Common myeloid progenitor, CD34-positive (primary cell): ENCODE measurements at regions of chr2 and their contacts with region 1.

Region 1: DNA sequence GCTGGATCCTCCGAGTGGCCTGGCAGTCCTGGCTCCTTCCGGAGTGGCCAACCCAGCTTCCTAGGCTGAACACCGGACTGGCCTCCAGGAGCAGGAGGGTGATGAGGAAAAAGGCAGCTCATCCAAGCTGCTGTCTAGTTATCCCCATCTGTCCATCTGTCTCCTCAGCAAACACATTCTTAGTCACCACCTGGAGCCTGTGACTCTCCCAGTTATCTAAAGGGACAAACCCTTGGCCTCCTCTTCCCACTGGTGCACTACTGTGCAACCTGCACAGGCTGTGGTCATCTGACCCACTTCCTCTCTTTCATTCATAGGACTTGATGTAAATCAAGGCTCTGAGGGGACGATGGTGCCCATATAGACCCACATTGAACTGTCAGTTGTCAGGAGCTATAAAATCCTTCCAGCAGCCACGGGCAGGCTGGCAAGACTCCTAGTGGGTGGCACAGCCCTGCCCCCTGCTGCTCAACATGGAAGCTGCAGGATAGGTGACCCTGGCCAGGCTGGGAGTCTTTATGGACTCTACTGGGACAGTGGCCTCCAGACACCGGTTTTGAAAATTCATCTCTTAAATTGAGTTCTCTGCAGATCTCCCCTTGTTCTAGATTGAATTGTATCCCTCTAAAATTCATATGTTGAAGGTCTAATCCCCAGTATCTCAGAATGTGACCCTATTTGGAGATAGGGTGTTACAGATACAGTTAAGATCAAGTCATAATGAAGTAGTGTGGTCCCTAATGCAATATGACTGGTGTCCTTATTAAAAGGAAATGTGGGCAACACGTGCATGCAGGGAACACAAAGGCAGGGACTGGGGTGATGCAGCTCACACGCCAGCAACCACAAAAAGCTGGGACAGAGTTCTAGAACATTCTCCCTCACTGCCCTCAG is 29.3 kb upstream of the DUSP2 start:
- DNase-seq: peak; percentile 64 to 83 (median 75)
- H3K4me3 ChIP-seq: no peak overlapping the region
- H3K27ac ChIP-seq: no peak overlapping the region
- H3K4me1 ChIP-seq: peaks cover 0 to 2% (median 0%) of the 10 kb centered on the region in 4 experiments
- H3K27me3 ChIP-seq: no peaks in the 10 kb centered on the region

Region 2: DNA sequence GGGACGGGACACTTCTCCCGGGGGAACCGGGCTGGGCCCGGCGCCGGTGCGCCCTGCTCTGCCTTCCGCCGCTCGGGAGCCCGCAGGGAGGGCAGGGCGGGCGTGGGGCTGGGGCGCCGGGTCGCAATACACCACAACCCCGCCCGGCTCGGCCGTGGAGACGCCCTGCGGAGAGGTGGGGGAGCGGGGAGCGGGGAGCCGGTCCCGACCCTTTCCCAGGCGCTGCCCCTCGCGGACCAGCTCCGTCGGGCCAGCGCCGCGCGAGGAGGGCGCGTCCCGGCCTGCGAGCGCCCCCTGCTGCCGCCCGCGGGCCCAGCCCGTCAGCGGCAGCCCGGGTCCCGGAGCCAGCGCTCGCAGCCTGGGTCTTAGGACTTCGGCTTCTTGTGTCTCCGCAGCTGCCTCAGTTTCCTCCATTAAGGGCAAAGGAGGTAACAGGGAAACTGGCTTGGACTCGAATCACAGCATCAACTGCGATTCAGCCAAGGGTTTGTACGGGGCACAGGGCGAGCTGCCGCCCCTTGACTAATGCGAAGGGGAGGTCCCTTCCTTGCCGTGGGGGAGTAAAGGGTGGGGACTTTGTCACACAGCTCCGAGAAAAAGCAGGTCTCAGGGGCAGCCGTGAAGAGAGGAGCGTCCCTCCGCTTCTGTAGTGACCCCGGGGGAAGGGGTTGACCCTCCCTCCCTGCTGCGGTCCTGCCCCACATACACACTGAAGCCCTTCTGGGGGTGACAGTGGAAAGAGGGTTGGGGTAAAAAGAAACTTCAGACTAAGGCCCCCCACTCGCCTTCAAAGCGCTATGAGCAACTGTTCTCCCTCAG is 57.4 kb before region 1 on chr2:
- CTCF ChIA-PET with region 1: interaction called, 22 read pairs
- POLR2A ChIA-PET with region 1: no interaction called
- DNase-seq: peak; percentile 28 to 54 (median 47)
- H3K4me3 ChIP-seq: peak overlapping the region in 6 of 7 experiments; percentile 42 to 73 (median 56)
- H3K27ac ChIP-seq: no peak overlapping the region
- H3K4me1 ChIP-seq: peaks cover 0 to 32% (median 27%) of the 10 kb centered on the region in 4 experiments
- H3K27me3 ChIP-seq: peaks cover 0 to 41% (median 8%) of the 10 kb centered on the region in 5 experiments

Region 3: GRCh38 chr2:96145036-96145847 is 29.3 kb before region 1 on chr2 and contains the start of gene DUSP2:
- CTCF ChIA-PET with region 1: interaction called, 346 read pairs
- POLR2A ChIA-PET with region 1: interaction called, 7 read pairs
- DNase-seq: peak; percentile 84 to 93 (median 88)
- H3K4me3 ChIP-seq: peak within 1 kb of the TSS; percentile 52 to 80 (median 69)
- H3K27ac ChIP-seq: peak within 1 kb of the TSS; percentile 77 to 79
- H3K4me1 ChIP-seq: peaks cover 10 to 71% (median 66%) of the 10 kb centered on the region in 4 experiments
- H3K27me3 ChIP-seq: no peaks in the 10 kb centered on the region

Region 4: DNA sequence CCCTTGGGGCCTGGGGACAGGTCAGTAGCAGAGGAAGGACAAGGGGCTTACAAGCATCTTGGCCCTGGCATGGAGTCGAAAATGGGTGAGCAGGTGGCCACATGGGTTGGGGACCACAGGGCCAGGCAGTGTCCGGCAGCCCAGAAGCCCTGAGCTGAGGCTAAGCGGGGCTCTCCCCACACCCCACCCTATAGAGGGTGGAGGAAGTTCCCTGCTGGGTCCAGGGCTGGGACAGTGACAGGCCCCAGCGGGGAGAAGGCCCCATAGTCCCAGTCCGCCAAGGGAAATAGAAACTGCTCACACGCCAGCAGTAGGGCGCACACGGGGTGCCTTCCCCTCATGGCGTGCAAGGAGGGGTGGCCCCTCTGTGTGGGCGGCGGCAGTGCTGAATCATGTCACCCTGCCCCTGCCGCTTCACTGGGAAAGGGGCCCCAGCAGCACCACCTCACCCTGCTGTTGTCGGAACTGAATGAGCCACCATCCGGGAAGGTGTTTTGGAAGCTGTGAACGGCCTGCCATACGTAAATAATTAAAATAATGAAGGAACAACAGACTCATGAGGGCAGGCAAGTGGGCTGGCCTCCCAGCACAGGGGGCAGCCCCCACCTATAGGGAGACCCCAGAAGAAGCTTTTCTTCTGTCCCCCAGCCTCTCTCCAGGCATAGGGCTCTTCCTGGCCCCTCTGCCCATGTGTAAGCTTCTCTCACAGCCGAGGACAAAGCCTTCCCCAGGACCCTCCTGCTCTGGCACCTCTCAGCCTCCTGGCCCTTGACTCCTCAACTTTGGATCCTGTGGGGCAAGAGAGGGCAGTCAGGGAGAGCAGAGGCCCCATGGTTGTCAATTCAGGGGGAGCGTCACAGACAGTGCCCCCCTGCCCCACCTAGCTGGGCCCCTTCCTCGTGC is 16.6 kb before region 1 on chr2:
- CTCF ChIA-PET with region 1: interaction called, 63 read pairs
- POLR2A ChIA-PET with region 1: no interaction called
- DNase-seq: peak; percentile 81 to 89 (median 86)
- H3K4me3 ChIP-seq: peak overlapping the region in 4 of 7 experiments; percentile 8 to 55 (median 25)
- H3K27ac ChIP-seq: peak overlapping the region; percentile 40 to 71
- H3K4me1 ChIP-seq: peaks cover 0 to 39% (median 24%) of the 10 kb centered on the region in 4 experiments
- H3K27me3 ChIP-seq: no peaks in the 10 kb centered on the region

Region 5: DNA sequence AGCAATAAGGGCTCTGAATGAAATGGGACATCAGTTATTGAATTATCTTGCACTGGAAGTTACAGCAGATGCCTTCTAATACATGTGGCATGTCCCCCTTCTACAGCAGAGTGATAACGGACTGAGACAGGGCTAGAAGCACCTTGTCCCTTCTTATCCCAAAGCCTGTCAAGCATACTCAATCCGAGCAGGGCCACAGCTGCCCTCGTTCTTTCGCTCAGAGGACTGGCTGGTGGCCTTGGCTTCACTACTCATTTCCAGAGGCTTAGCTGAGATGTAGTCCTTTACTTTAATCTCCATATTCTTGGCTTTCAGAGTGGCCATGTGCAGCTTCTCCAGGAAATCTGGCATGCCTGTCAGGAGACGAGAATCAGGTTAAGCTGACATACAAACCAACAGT is 12.1 kb after region 1 on chr2:
- CTCF ChIA-PET with region 1: interaction called, 16 read pairs
- POLR2A ChIA-PET with region 1: no interaction called
- DNase-seq: no peak
- H3K4me3 ChIP-seq: no peak overlapping the region
- H3K27ac ChIP-seq: no peak overlapping the region
- H3K4me1 ChIP-seq: no peaks in the 10 kb centered on the region
- H3K27me3 ChIP-seq: no peaks in the 10 kb centered on the region

Region 6: GRCh38 chr2:96195410-96196066 is 21.0 kb after region 1 on chr2:
- CTCF ChIA-PET with region 1: interaction called, 13 read pairs
- POLR2A ChIA-PET with region 1: interaction called, 3 read pairs
- DNase-seq: peak in 1 of 3 donors; percentile 31
- H3K4me3 ChIP-seq: no peak overlapping the region
- H3K27ac ChIP-seq: no peak overlapping the region
- H3K4me1 ChIP-seq: no peaks in the 10 kb centered on the region
- H3K27me3 ChIP-seq: no peaks in the 10 kb centered on the region